Heart left ventricle (tissue), 16 donors: ENCODE measurements at regions of chr3 and their contacts with region 1.

Region 1: DNA sequence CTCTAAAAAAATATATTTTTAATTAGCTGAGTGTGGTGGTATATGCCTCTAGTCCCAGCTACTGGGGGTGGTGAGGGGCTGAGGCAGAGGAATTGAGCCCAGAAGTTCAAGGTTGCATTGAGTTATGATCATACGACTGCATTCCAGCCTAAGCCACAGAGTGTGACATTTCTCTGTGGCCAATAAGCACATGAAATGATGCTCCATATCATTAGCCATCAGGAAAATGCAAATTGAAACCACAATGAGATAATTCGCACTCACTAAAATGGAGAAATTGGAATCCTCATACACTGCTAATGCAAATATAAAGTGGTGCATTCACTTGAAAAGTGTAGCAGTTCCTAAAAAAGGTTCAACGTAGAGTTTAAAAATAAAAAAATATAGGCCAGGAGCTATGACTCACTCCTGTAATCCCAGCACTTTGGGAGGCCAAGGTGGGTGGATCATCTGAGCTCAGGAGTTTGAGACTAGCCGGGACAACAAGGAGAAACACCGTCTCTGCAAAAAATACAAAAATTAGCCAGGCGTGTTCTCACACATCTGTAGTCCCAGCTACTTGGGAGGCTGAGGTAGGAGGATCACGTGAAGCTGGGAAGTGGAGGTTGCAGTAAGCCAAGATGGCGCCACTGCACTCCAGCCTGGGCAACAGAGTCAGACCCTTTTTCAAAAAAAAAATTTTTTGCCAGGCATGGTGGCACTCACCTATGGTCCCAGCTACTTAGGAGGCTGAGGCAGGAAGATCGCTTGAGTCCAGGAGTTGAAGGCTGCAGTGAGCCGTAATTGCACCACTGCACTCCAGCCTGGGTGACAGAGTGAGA is 35.2 kb downstream of the IFT122 start:
- DNase-seq: no peak
- ATAC-seq: no peak
- H3K4me3 ChIP-seq: no peak overlapping the region
- H3K27ac ChIP-seq: no peak overlapping the region
- H3K4me1 ChIP-seq: peaks cover 0 to 7% (median 0%) of the 10 kb centered on the region in 12 donors
- H3K27me3 ChIP-seq: no peaks in the 10 kb centered on the region
- CTCF ChIP-seq: no peak
- POLR2A ChIP-seq: no peak

Region 2: GRCh38 chr3:129183569-129184395 is 291.4 kb before region 1 on chr3 and contains the start of gene CNBP:
- intact Hi-C with region 1: no loop called
- DNase-seq: peak; percentile 95 to 97 (median 95)
- ATAC-seq: peak; percentile 97 to 99 (median 98)
- H3K4me3 ChIP-seq: peak within 1 kb of the TSS; percentile 66 to 99 (median 88)
- H3K27ac ChIP-seq: peak within 1 kb of the TSS; percentile 92 to 100 (median 98)
- H3K4me1 ChIP-seq: peaks cover 10 to 68% (median 45%) of the 10 kb centered on the region in 12 donors
- H3K27me3 ChIP-seq: no peaks in the 10 kb centered on the region
- CTCF ChIP-seq: no peak
- POLR2A ChIP-seq: peak; percentile 76 to 99
- total RNA-seq, gene CNBP: 388 to 743 (median 512) TPM

Region 3: GRCh38 chr3:129383292-129383860 is 91.8 kb before region 1 on chr3:
- intact Hi-C with region 1: loop called in 3 of 10 experiments (anchors 10 kb)
- DNase-seq: peak in 4 of 5 donors; percentile 50 to 64 (median 62)
- ATAC-seq: peak; percentile 77 to 89 (median 89)
- H3K4me3 ChIP-seq: no peak overlapping the region
- H3K27ac ChIP-seq: peak overlapping the region in 1 of 12 donors; percentile 7
- H3K4me1 ChIP-seq: peaks cover 0 to 19% (median 4%) of the 10 kb centered on the region in 12 donors
- H3K27me3 ChIP-seq: no peaks in the 10 kb centered on the region
- CTCF ChIP-seq: peak; percentile 58 to 84 (median 74)
- POLR2A ChIP-seq: no peak